PC-3 (cell line): ENCODE measurements at regions of chr14 and their contacts with region 1.

Region 1: DNA sequence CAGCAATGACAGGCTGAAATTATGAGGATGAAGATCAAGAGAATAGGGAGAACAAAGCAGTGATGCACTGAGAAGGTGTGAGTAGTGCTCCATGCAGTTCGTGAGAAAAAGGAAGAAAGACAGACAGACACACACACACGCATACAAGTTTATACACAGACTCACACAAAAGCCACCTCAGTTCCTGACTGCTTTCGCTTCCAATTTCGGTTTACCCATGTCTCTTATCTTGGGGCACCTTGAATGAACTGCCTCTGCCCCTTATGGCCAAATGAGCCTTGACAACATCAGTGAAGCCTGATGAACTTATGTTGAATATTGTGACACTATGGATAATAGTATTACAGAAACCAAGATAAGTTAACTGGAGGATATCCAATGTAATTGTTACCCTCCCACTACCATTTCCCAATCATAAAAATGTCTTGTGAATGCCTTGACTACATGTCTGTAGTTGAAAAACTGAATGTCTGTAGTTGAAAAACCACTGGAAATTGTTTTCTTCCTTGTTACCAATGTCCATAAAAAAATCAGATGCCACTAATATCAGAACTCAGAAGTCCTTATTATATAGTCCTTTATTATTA is 380.4 kb upstream of the DDHD1 start:
- DNase-seq: no peak
- ATAC-seq: no peak
- H3K4me3 ChIP-seq: no peak overlapping the region
- H3K27ac ChIP-seq: peak overlapping the region; percentile 94
- H3K4me1 ChIP-seq: peaks cover 35% of the 10 kb centered on the region
- H3K27me3 ChIP-seq: no peaks in the 10 kb centered on the region
- CTCF ChIP-seq: no peak

Region 2: GRCh38 chr14:53285805-53286204 is 247.7 kb before region 1 on chr14:
- CTCF ChIA-PET with region 1: no interaction called
- POLR2A ChIA-PET with region 1: no interaction called
- intact Hi-C with region 1: no loop called
- DNase-seq: peak; percentile 44
- ATAC-seq: peak; percentile 62
- H3K4me3 ChIP-seq: no peak overlapping the region
- H3K27ac ChIP-seq: no peak overlapping the region
- H3K4me1 ChIP-seq: no peaks in the 10 kb centered on the region
- H3K27me3 ChIP-seq: no peaks in the 10 kb centered on the region
- CTCF ChIP-seq: no peak

Region 3: GRCh38 chr14:53325176-53325806 is 208.2 kb before region 1 on chr14:
- CTCF ChIA-PET with region 1: no interaction called
- POLR2A ChIA-PET with region 1: no interaction called
- intact Hi-C with region 1: loop called (anchors 5 kb)
- DNase-seq: peak; percentile 27
- ATAC-seq: peak; percentile 59
- H3K4me3 ChIP-seq: no peak overlapping the region
- H3K27ac ChIP-seq: no peak overlapping the region
- H3K4me1 ChIP-seq: peaks cover 16% of the 10 kb centered on the region
- H3K27me3 ChIP-seq: no peaks in the 10 kb centered on the region
- CTCF ChIP-seq: peak; percentile 52; the same call in 1 of the 2 replicates

Region 4: GRCh38 chr14:53432378-53432802 is 101.1 kb before region 1 on chr14:
- CTCF ChIA-PET with region 1: interaction called, 8 read pairs
- POLR2A ChIA-PET with region 1: no interaction called
- intact Hi-C with region 1: loop called (anchors 1 kb)
- DNase-seq: peak; percentile 77
- ATAC-seq: peak; percentile 95
- H3K4me3 ChIP-seq: no peak overlapping the region
- H3K27ac ChIP-seq: no peak overlapping the region
- H3K4me1 ChIP-seq: peaks cover 18% of the 10 kb centered on the region
- H3K27me3 ChIP-seq: no peaks in the 10 kb centered on the region
- CTCF ChIP-seq: peak; percentile 96

Region 5: GRCh38 chr14:53458368-53458814 is 75.1 kb before region 1 on chr14:
- CTCF ChIA-PET with region 1: interaction called, 4 read pairs
- POLR2A ChIA-PET with region 1: interaction called, 4 read pairs
- intact Hi-C with region 1: loop called (anchors 1 kb)
- DNase-seq: peak; percentile 95
- ATAC-seq: peak; percentile 95
- H3K4me3 ChIP-seq: peak overlapping the region; percentile 41; the same call in 1 of the 2 replicates
- H3K27ac ChIP-seq: peak overlapping the region; percentile 90
- H3K4me1 ChIP-seq: peaks cover 27% of the 10 kb centered on the region
- H3K27me3 ChIP-seq: no peaks in the 10 kb centered on the region
- CTCF ChIP-seq: no peak

Region 6: DNA sequence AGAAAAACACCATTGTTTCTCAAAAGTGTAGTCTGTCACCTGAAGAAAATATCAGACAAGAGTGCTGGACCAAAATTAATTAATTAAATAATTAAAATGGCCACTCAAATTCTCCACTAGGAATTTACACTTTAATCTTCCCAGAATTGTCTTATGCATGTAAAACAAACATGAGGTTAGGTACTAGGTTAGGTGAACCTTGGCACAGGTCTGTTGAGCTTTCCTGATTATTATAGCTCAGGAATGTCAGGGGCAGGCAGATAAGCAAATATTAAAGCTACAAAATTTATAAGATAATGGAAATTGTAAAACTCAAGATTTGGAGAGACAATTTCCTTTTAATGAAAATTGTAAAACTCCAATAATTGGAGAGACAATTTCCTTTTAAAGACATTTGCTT is 170.0 kb after region 1 on chr14:
- CTCF ChIA-PET with region 1: no interaction called
- POLR2A ChIA-PET with region 1: no interaction called
- intact Hi-C with region 1: no loop called
- DNase-seq: no peak
- ATAC-seq: no peak
- H3K4me3 ChIP-seq: no peak overlapping the region
- H3K27ac ChIP-seq: no peak overlapping the region
- H3K4me1 ChIP-seq: no peaks in the 10 kb centered on the region
- H3K27me3 ChIP-seq: peaks cover 11% of the 10 kb centered on the region; the same call in 1 of the 2 replicates
- CTCF ChIP-seq: no peak

Region 7: DNA sequence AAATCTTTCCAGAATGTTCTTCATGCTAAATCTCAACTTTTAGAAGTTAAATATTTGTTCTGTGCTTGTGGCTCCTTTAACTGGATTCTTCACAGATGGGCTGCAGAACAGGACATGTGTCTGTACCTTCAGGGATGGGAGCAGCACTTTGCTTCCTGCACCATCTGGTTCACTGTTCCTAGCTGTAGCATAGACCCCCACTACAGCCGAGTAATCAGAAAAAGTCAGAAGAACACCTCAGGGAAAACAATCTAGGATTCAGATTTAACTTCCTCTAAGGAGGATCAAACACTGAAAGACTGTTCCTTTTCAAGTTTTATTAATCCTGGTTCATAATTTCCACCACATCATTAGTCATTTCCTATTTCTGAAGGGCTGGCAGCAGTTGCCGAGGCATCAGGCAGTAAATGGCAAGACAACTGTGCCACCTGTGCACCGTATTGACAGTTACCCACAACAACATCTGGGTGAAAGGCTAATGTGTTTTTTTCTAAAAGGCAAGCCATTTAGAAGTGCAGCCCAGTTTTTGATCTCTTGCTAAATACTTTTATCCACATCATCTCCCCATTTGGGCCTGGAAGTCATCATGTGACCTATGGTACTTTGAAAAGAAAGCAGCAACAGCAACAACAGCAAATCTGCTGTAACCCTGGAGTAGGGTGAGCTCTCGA is 635.9 kb after region 1 on chr14:
- CTCF ChIA-PET with region 1: interaction called, 3 read pairs
- POLR2A ChIA-PET with region 1: no interaction called
- intact Hi-C with region 1: loop called (anchors 1 kb)
- DNase-seq: peak; percentile 100
- ATAC-seq: peak; percentile 85
- H3K4me3 ChIP-seq: peak overlapping the region; percentile 8; the same call in 1 of the 2 replicates
- H3K27ac ChIP-seq: peak overlapping the region; percentile 86
- H3K4me1 ChIP-seq: peaks cover 76% of the 10 kb centered on the region
- H3K27me3 ChIP-seq: no peaks in the 10 kb centered on the region
- CTCF ChIP-seq: peak; percentile 31; the same call in 1 of the 2 replicates